Heart right ventricle (tissue), 16 donors: ENCODE measurements at regions of chr6 and their contacts with region 1.

Region 1: GRCh38 chr6:12911387-12911960 is 194.9 kb downstream of the PHACTR1 start:
- DNase-seq: no peak
- ATAC-seq: peak in 1 of 8 donors; percentile 30
- H3K4me3 ChIP-seq: no peak overlapping the region
- H3K27ac ChIP-seq: no peak overlapping the region
- H3K4me1 ChIP-seq: peaks cover 0 to 6% (median 0%) of the 10 kb centered on the region in 9 donors
- H3K27me3 ChIP-seq: no peaks in the 10 kb centered on the region
- CTCF ChIP-seq: peak; percentile 39 to 73 (median 65)

Region 2: GRCh38 chr6:12875051-12875450 is 36.4 kb before region 1 on chr6:
- intact Hi-C with region 1: no loop called
- DNase-seq: no peak
- ATAC-seq: no peak
- H3K4me3 ChIP-seq: no peak overlapping the region
- H3K27ac ChIP-seq: no peak overlapping the region
- H3K4me1 ChIP-seq: no peaks in the 10 kb centered on the region
- H3K27me3 ChIP-seq: peaks cover 0 to 31% (median 16%) of the 10 kb centered on the region in 7 donors
- CTCF ChIP-seq: no peak

Region 3: DNA sequence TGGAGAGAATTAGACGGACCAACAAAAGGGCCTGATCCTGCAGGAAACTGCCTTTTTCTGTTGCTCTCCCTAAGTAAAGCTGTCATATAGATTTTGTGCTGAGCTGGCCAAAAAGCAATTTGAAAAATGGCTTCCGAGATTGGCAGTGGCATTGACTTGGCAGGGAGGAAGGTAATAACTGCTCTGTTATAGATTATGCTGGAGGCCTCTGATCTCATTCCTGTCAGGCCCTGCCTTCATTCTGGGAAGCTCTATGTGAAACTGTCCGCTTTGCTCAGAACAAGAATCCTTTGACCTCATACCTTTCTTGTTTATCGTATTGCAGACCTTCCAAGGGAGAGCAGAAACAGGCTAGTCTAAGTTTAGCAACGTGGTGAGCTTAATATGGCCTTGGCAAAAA is 39.5 kb after region 1 on chr6:
- intact Hi-C with region 1: loop called in 1 of 10 experiments (anchors 5 kb)
- DNase-seq: no peak
- ATAC-seq: peak in 6 of 8 donors; percentile 38 to 97 (median 72)
- H3K4me3 ChIP-seq: no peak overlapping the region
- H3K27ac ChIP-seq: peak overlapping the region in 6 of 10 donors; percentile 15 to 76 (median 61)
- H3K4me1 ChIP-seq: peaks cover 0 to 20% (median 6%) of the 10 kb centered on the region in 9 donors
- H3K27me3 ChIP-seq: no peaks in the 10 kb centered on the region
- CTCF ChIP-seq: no peak

Region 4: DNA sequence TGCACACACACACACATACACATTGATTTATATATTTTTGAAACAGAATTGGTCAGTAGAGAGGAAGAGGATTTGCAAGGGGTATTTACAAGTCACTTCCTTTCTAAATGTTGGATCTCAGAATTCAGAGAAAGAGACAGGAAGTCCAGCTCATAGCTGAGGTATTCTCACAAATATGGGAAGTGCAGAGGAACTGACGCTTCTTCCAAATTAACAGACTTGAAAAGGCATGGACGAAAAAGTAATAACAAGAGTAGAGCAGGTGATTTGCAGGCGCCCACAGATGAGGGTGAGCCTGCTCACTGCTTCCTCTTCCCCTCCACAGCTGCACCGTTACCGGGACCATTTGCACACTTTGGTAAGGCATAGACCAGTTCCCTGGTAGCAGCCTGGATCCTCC is 51.5 kb after region 1 on chr6:
- intact Hi-C with region 1: loop called in 1 of 10 experiments (anchors 5 kb)
- DNase-seq: no peak
- ATAC-seq: peak in 7 of 8 donors; percentile 26 to 65 (median 43)
- H3K4me3 ChIP-seq: peak overlapping the region in 9 of 10 donors; percentile 4 to 30 (median 23)
- H3K27ac ChIP-seq: peak overlapping the region; percentile 38 to 91 (median 78)
- H3K4me1 ChIP-seq: peaks cover 0 to 53% (median 37%) of the 10 kb centered on the region in 9 donors
- H3K27me3 ChIP-seq: no peaks in the 10 kb centered on the region
- CTCF ChIP-seq: no peak

Region 5: DNA sequence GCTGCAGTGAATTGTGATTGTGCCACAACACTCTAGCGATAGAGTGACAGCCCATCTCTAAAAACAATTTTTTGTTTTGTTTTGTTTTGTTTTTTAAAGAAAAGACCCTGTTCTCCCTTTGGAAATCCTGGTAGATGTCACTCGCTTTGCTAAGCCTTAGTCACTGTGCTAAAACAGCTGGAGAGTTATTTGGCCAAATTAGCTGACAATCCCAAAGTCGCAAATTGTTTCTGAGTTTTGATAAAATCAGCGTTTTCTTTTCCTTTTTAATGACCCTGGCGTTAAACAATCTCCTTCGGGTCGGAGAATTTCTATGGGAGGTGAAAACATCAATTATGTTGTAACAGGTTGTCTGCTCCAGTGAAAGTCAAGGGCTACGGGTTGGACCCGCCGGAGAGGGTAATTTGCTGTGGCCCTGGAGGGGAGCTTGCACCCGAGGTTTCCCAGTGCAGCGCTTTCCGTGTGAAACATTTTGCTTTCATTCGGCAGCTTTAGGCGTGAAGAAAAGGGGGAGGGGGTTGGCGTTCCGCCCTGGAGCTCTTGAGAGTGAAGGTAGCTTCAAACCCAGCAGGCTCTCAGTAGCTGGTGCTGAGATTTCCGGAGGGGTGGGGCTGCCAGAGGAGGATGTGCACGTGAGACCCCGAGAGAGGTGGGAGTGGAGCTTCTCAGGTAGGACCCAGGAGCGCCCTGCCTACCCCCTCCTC is 101.7 kb after region 1 on chr6:
- intact Hi-C with region 1: loop called in 2 of 10 experiments (anchors 10 kb)
- DNase-seq: peak; percentile 52 to 69
- ATAC-seq: peak; percentile 15 to 58 (median 40)
- H3K4me3 ChIP-seq: peak overlapping the region; percentile 7 to 78 (median 70)
- H3K27ac ChIP-seq: peak overlapping the region in 9 of 10 donors; percentile 51 to 90 (median 77)
- H3K4me1 ChIP-seq: peaks cover 9 to 40% (median 29%) of the 10 kb centered on the region in 9 donors
- H3K27me3 ChIP-seq: peaks cover 0 to 28% (median 0%) of the 10 kb centered on the region in 7 donors
- CTCF ChIP-seq: no peak

Region 6: GRCh38 chr6:13044373-13045239 is 133.1 kb after region 1 on chr6:
- intact Hi-C with region 1: loop called in 1 of 10 experiments (anchors 10 kb)
- DNase-seq: no peak
- ATAC-seq: peak in 2 of 8 donors; percentile 38 to 67
- H3K4me3 ChIP-seq: no peak overlapping the region
- H3K27ac ChIP-seq: no peak overlapping the region
- H3K4me1 ChIP-seq: peaks cover 0 to 11% (median 5%) of the 10 kb centered on the region in 9 donors
- H3K27me3 ChIP-seq: no peaks in the 10 kb centered on the region
- CTCF ChIP-seq: no peak

Region 7: DNA sequence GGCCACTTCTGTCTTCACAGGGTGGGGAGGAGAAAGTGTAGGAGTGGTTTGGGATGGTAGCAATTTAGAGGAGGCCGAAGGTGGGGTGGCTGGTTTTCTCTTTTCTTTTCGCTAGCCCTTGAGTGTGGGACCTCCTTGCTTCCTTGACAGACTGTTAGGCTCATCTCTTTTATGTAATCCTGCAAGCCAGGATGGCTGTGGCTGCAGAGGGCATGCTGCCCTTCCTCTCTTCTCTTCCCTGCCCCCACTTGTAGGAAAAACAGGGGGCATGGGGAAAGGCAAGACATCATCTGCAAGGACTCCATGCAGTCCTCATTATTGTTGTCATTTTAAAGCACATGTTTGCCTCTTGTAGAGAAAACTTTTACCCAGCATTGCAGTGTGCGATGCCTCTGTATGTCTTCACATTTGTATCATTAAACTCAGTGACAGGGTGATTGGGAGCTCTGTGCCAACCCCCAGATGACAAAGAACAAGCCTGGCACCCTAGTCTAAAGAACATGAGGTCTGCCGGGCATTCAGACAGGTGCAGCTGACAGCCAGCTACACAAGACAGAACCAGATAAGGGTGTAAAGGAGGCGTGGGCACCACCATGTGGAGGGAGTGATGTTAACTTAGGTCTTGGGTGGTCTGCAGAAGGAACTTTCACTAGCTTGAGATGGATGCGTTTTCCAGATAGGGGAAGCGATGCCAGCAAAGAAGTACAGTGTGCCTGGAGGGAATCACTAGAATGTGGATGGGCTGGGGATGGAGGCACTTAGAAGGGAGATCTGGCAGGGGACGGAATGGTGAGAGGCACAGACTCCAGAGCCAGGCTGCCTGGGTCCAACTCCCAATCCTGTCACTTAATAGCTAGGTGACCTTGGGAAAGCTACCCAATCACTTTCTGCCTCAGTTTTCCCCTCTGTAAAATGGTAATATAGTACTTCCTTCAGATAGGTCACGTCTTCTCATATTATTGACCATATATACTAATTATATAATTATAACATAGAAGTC is 209.3 kb after region 1 on chr6:
- intact Hi-C with region 1: loop called in 5 of 10 experiments (anchors 2 to 10 kb)
- DNase-seq: peak; percentile 36 to 64
- ATAC-seq: peak; percentile 78 to 96 (median 91)
- H3K4me3 ChIP-seq: no peak overlapping the region
- H3K27ac ChIP-seq: peak overlapping the region in 7 of 10 donors; percentile 18 to 61 (median 37)
- H3K4me1 ChIP-seq: peaks cover 0 to 32% (median 12%) of the 10 kb centered on the region in 9 donors
- H3K27me3 ChIP-seq: no peaks in the 10 kb centered on the region
- CTCF ChIP-seq: peak in 6 of 9 donors; percentile 7 to 54 (median 35)

Region 8: DNA sequence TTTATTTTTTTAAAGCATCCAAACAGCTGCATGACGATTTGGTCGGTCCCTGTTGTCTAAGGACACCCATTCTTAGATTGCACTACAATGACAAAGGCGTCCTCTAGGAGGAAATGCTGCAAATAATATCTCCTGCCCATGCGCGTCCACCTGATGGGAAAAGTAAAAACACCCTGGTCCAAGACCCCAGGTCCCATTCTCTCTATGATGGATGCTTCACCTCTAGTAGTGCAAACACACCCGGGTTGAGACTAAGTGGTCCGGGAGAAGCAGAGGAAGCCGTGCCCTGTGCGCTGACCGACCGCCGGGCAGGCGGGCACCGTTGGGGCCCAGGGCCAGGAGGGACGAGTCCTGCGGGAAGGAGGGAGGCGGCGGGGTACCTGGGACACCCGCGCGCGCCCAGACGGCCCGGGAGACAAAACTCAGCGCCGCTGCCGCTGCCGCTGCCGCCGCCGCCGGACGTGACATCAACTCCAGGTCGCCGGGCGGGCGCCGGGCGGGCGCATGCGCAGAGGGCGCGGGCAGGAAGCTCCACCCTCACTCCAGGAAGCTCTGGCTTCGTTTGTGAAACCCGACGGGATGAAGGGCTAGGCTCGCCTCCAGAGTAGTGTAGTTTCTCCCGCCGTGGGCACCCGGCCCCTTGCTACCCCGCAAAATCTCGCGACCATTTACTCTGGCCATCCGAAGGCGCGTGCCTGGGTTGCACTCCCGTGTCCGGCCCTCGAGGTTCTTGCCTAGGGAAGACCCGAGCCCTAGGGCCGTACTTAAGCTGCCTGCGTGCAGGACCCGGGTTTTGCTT is 416.8 kb after region 1 on chr6 and contains the start of gene TBC1D7:
- intact Hi-C with region 1: loop called (anchors 2 to 5 kb)
- DNase-seq: peak; percentile 91 to 95
- ATAC-seq: peak; percentile 93 to 98 (median 96)
- H3K4me3 ChIP-seq: peak within 1 kb of the TSS; percentile 75 to 95 (median 82)
- H3K27ac ChIP-seq: peak within 1 kb of the TSS; percentile 71 to 98 (median 95)
- H3K4me1 ChIP-seq: peaks cover 0 to 45% (median 21%) of the 10 kb centered on the region in 9 donors
- H3K27me3 ChIP-seq: no peaks in the 10 kb centered on the region
- CTCF ChIP-seq: peak in 2 of 9 donors; percentile 15 to 17
- total RNA-seq, gene TBC1D7: 21.7 to 42.6 (median 28.6) TPM